ENCODE measurements at regions of chr16 and their contacts with region 1.

Region 1: GRCh38 chr16:10297341-10298006 is 88.4 kb upstream of the ATF7IP2 start:
- DNase-seq: peak; percentile 90
- ATAC-seq: peak; percentile 96
- H3K4me3 ChIP-seq: peak overlapping the region in 4 of 5 experiments; percentile 27 to 61 (median 42)
- H3K4me3 Mint-ChIP-seq: peak overlapping the region; percentile 75
- H3K27ac ChIP-seq: peak overlapping the region; percentile 99 to 100
- H3K27ac Mint-ChIP-seq: peak overlapping the region; percentile 95
- H3K4me1 ChIP-seq: peaks cover 38 to 43% of the 10 kb centered on the region in 2 donors
- H3K4me1 Mint-ChIP-seq: peaks cover 53% of the 10 kb centered on the region
- H3K27me3 ChIP-seq: no peaks in the 10 kb centered on the region
- H3K27me3 Mint-ChIP-seq: no peaks in the 10 kb centered on the region
- CTCF ChIP-seq: no peak

Region 2: DNA sequence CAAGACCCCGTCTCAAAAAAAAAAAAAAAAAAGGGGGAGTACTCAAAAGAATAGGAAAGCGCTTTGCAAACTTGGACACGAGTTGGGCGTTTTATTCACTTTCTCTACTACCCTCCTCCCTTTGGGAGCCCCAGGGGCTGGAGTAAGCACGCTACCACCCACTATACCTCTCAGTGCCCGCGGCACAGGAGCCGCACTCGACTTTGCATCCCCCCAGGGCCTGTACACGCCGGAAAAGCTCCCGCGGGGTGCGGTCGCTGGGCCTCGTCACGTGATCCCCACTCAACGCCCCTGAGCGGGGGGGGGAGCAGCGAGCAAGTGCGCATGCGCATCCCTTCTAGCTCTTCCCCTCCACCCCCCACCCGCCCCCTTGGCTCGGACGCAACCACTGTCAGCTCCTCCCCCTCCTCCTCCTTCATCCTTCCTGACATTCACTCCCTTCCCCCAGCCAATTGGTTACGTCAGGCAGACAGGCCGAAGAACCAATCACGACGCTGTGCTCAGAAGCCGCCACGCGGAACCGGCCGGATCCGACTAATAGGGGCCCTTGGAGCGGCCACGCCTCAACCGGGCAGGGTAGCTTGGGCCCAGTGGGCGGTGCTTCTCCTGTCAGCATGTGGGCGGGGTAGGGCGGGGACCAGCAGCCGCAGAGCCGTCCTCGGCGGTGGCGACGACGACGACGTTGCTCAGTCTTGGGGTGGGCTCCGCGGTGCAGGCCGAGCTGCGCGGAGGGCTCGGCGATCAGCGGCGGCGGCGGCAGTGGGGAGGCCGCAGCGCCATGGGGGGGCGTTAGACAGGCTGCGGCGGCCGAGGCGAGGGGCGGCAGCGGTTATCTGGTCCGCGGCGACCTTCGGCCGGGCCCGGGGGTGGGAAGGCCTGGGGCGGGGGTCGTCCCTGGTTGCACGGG is 1206.3 kb before region 1 on chr16 and contains the start of gene HAPSTR1:
- CTCF ChIA-PET with region 1: no interaction called
- POLR2A ChIA-PET with region 1: no interaction called
- intact Hi-C with region 1: loop called (anchors 10 kb)
- DNase-seq: peak; percentile 100
- ATAC-seq: peak; percentile 84
- H3K4me3 ChIP-seq: peak within 1 kb of the TSS; percentile 84 to 95 (median 88)
- H3K4me3 Mint-ChIP-seq: peak within 1 kb of the TSS; percentile 97
- H3K27ac ChIP-seq: peak within 1 kb of the TSS; percentile 90 to 98
- H3K27ac Mint-ChIP-seq: peak within 1 kb of the TSS; percentile 98
- H3K4me1 ChIP-seq: peaks cover 31 to 37% of the 10 kb centered on the region in 2 donors
- H3K4me1 Mint-ChIP-seq: peaks cover 38% of the 10 kb centered on the region
- H3K27me3 ChIP-seq: no peaks in the 10 kb centered on the region
- H3K27me3 Mint-ChIP-seq: no peaks in the 10 kb centered on the region
- CTCF ChIP-seq: no peak
- total RNA-seq, gene HAPSTR1: 99.2 and 101 TPM in 2 replicates

Region 3: GRCh38 chr16:10162981-10163380 is 134.5 kb before region 1 on chr16:
- CTCF ChIA-PET with region 1: no interaction called
- POLR2A ChIA-PET with region 1: no interaction called
- intact Hi-C with region 1: no loop called
- DNase-seq: no peak
- ATAC-seq: no peak
- H3K4me3 ChIP-seq: no peak overlapping the region
- H3K4me3 Mint-ChIP-seq: no peak overlapping the region
- H3K27ac ChIP-seq: no peak overlapping the region
- H3K27ac Mint-ChIP-seq: no peak overlapping the region
- H3K4me1 ChIP-seq: no peaks in the 10 kb centered on the region
- H3K4me1 Mint-ChIP-seq: no peaks in the 10 kb centered on the region
- H3K27me3 ChIP-seq: peaks cover 0 to 26% (median 13%) of the 10 kb centered on the region in 4 experiments
- H3K27me3 Mint-ChIP-seq: peaks cover 44% of the 10 kb centered on the region
- CTCF ChIP-seq: no peak

Region 4: DNA sequence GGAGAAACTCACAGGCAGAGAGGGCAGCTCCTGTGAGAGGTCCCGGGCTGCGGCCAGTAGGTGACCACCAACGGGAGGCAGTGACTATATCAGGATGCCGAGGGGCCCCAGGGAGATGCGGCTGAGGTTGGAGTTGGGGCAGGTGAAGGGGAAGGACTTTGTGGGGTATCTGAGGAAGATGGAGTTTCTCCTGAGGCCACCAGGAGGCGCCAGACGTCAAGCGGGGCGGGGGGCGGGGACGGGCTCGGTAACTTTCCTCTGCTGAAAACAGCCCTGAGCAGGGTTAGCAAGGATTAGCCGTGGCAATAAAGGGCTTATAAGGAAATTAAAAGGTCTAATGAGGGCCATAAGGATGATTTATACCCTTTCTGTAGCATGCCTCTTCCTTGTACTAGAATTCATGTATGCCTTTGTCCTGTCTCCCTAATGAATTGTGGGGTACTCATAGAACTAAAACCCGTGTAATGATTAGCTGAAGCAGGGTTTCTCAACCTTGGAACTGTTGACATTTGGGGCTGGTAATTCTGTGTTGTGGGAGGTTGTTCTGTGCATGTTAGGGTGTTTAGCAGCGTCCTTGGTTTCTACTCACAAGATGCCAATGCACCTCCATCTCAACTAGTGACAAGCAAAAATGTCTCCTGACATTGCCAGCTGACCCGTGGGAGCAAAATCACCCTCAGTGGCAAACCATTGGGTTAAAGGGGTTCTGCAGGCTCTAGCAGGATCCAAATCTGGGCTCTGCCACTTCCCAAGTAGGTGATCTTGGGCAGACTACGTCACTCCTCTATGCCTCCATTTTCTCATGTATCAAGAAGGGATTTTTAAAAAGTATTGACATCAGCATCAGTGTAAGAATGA is 40.5 kb before region 1 on chr16:
- CTCF ChIA-PET with region 1: interaction called, 25 read pairs
- POLR2A ChIA-PET with region 1: no interaction called
- intact Hi-C with region 1: loop called (anchors 1 kb)
- DNase-seq: peak; percentile 83
- ATAC-seq: peak; percentile 90
- H3K4me3 ChIP-seq: peak overlapping the region in 1 of 5 experiments; percentile 18
- H3K4me3 Mint-ChIP-seq: peak overlapping the region; percentile 42
- H3K27ac ChIP-seq: peak overlapping the region in 1 of 2 donors; percentile 56
- H3K27ac Mint-ChIP-seq: peak overlapping the region; percentile 70
- H3K4me1 ChIP-seq: peaks cover 31 to 49% of the 10 kb centered on the region in 2 donors
- H3K4me1 Mint-ChIP-seq: peaks cover 45% of the 10 kb centered on the region
- H3K27me3 ChIP-seq: no peaks in the 10 kb centered on the region
- H3K27me3 Mint-ChIP-seq: no peaks in the 10 kb centered on the region
- CTCF ChIP-seq: peak; percentile 87

Region 5: GRCh38 chr16:10280262-10281170 is 17.0 kb before region 1 on chr16:
- CTCF ChIA-PET with region 1: interaction called, 4 read pairs
- POLR2A ChIA-PET with region 1: no interaction called
- intact Hi-C with region 1: loop called (anchors 2 kb)
- DNase-seq: no peak
- ATAC-seq: no peak
- H3K4me3 ChIP-seq: no peak overlapping the region
- H3K4me3 Mint-ChIP-seq: no peak overlapping the region
- H3K27ac ChIP-seq: no peak overlapping the region
- H3K27ac Mint-ChIP-seq: no peak overlapping the region
- H3K4me1 ChIP-seq: peaks cover 6 to 13% of the 10 kb centered on the region in 2 donors
- H3K4me1 Mint-ChIP-seq: peaks cover 15% of the 10 kb centered on the region
- H3K27me3 ChIP-seq: no peaks in the 10 kb centered on the region
- H3K27me3 Mint-ChIP-seq: no peaks in the 10 kb centered on the region
- CTCF ChIP-seq: no peak

Region 6: DNA sequence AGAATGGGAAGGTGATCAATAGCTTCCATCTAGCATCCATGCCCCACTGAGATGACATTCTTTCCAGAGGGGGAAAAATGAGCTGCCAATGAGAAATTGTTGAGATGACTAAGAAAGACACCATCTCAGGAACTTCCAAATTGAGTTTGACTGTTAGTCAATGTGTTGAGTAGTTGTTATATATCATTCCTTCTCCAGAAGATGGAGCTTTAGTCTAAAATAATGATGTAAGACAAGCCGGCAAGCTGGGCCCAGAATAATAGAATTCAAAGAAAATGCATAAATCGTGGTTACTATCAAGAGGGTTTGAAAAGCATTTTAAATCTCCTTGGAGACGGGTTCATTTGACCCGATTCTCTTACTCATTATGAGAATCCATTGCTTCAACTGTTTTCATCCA is 17.3 kb after region 1 on chr16:
- CTCF ChIA-PET with region 1: interaction called, 53 read pairs
- POLR2A ChIA-PET with region 1: interaction called, 5 read pairs
- intact Hi-C with region 1: loop called (anchors 2 kb)
- DNase-seq: peak; percentile 47
- ATAC-seq: peak; percentile 46
- H3K4me3 ChIP-seq: no peak overlapping the region
- H3K4me3 Mint-ChIP-seq: peak overlapping the region; percentile 23
- H3K27ac ChIP-seq: no peak overlapping the region
- H3K27ac Mint-ChIP-seq: peak overlapping the region; percentile 73
- H3K4me1 ChIP-seq: peaks cover 18 to 32% of the 10 kb centered on the region in 2 donors
- H3K4me1 Mint-ChIP-seq: peaks cover 28% of the 10 kb centered on the region
- H3K27me3 ChIP-seq: no peaks in the 10 kb centered on the region
- H3K27me3 Mint-ChIP-seq: no peaks in the 10 kb centered on the region
- CTCF ChIP-seq: peak; percentile 33

Region 7: GRCh38 chr16:10385725-10386516 is 88.4 kb after region 1 on chr16 and contains the start of gene ATF7IP2:
- CTCF ChIA-PET with region 1: no interaction called
- POLR2A ChIA-PET with region 1: no interaction called
- intact Hi-C with region 1: loop called (anchors 5 kb)
- DNase-seq: peak; percentile 93
- ATAC-seq: peak; percentile 99
- H3K4me3 ChIP-seq: peak within 1 kb of the TSS; percentile 72 to 97 (median 93)
- H3K4me3 Mint-ChIP-seq: peak within 1 kb of the TSS; percentile 100
- H3K27ac ChIP-seq: peak within 1 kb of the TSS; percentile 72 to 86
- H3K27ac Mint-ChIP-seq: peak within 1 kb of the TSS; percentile 99
- H3K4me1 ChIP-seq: peaks cover 11 to 20% of the 10 kb centered on the region in 2 donors
- H3K4me1 Mint-ChIP-seq: peaks cover 45% of the 10 kb centered on the region
- H3K27me3 ChIP-seq: no peaks in the 10 kb centered on the region
- H3K27me3 Mint-ChIP-seq: no peaks in the 10 kb centered on the region
- CTCF ChIP-seq: no peak
- total RNA-seq, gene ATF7IP2: 63.7 and 67.5 TPM in 2 replicates

Region 8: DNA sequence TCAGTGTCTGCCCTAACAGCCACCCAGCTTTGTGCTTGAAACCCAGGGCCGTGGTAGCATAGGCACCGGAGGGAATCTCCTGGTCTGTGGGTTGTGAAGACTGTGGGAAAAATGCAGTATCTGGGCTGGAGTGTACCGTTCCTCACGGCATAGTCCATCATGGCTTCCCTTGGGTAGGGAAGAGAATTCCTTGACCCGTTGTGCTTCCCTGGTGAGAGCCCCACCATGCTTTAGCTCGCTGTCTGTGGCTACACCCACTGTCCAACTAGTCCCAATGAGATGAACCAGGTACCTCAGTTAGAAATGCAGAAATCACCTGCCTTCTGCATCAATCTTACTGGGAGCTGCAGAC is 155.7 kb after region 1 on chr16:
- CTCF ChIA-PET with region 1: no interaction called
- POLR2A ChIA-PET with region 1: no interaction called
- intact Hi-C with region 1: no loop called
- DNase-seq: no peak
- ATAC-seq: no peak
- H3K4me3 ChIP-seq: no peak overlapping the region
- H3K4me3 Mint-ChIP-seq: no peak overlapping the region
- H3K27ac ChIP-seq: no peak overlapping the region
- H3K27ac Mint-ChIP-seq: no peak overlapping the region
- H3K4me1 ChIP-seq: no peaks in the 10 kb centered on the region
- H3K4me1 Mint-ChIP-seq: no peaks in the 10 kb centered on the region
- H3K27me3 ChIP-seq: no peaks in the 10 kb centered on the region
- H3K27me3 Mint-ChIP-seq: no peaks in the 10 kb centered on the region
- CTCF ChIP-seq: no peak

Region 9: GRCh38 chr16:10743610-10744393 is 446.3 kb after region 1 on chr16 and contains the start of gene NUBP1:
- CTCF ChIA-PET with region 1: no interaction called
- POLR2A ChIA-PET with region 1: interaction called, 3 read pairs
- intact Hi-C with region 1: loop called (anchors 5 kb)
- DNase-seq: peak; percentile 100
- ATAC-seq: peak; percentile 93
- H3K4me3 ChIP-seq: peak within 1 kb of the TSS; percentile 61 to 85 (median 73)
- H3K4me3 Mint-ChIP-seq: peak within 1 kb of the TSS; percentile 93
- H3K27ac ChIP-seq: peak within 1 kb of the TSS; percentile 93 to 97
- H3K27ac Mint-ChIP-seq: peak within 1 kb of the TSS; percentile 97
- H3K4me1 ChIP-seq: peaks cover 31 to 37% of the 10 kb centered on the region in 2 donors
- H3K4me1 Mint-ChIP-seq: peaks cover 55% of the 10 kb centered on the region
- H3K27me3 ChIP-seq: no peaks in the 10 kb centered on the region
- H3K27me3 Mint-ChIP-seq: no peaks in the 10 kb centered on the region
- CTCF ChIP-seq: no peak
- total RNA-seq, gene NUBP1: 54.3 and 67.3 TPM in 2 replicates

Region 10: DNA sequence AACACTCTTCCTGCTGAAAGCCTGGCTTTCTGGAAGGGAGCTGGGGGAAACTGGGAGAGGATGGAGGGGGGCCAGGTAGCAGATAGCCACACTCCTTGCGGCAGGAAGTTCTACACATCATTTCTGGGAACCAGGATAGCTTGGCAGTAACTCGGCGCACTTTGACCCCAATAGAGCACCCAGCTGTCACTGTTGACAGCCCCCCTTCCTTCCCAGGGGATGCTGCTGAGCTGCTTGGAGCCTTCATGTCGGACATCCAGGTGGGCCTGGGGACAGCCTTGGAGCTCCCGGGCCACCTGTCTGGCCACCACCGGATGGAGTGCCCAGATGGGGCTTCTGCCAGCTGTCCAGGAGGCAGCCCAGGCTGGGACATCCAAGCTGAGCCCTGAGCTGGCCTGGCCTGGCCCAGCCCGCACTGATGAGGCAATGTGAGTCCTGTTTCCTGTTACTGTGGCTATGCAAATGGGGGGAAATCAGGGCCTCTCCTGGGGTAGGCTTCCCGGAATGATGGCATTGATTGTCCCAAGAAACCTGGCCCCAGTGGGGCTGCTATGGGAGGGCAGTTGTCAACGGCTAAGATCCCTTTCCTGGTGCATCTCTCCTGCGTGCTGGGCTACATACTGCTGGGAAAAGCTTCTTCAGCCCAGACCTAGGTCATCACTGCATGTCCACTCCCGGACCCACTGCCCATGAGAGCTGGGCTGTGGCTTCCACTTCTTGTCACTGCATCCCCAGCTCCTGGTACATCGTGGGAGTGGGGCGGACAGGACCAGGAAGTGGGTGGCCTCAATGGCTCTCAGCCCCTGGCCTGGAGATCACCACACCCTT is 908.5 kb after region 1 on chr16:
- CTCF ChIA-PET with region 1: no interaction called
- POLR2A ChIA-PET with region 1: no interaction called
- intact Hi-C with region 1: no loop called
- DNase-seq: no peak
- ATAC-seq: no peak
- H3K4me3 ChIP-seq: no peak overlapping the region
- H3K4me3 Mint-ChIP-seq: peak overlapping the region; percentile 1
- H3K27ac ChIP-seq: no peak overlapping the region
- H3K27ac Mint-ChIP-seq: no peak overlapping the region
- H3K4me1 ChIP-seq: peaks cover 7 to 21% of the 10 kb centered on the region in 2 donors
- H3K4me1 Mint-ChIP-seq: peaks cover 38% of the 10 kb centered on the region
- H3K27me3 ChIP-seq: peaks cover 0 to 22% (median 5%) of the 10 kb centered on the region in 4 experiments
- H3K27me3 Mint-ChIP-seq: peaks cover 29% of the 10 kb centered on the region
- CTCF ChIP-seq: no peak

Measured in B cell (primary cell).